ENCODE measurements at regions of chr19 and their contacts with region 1.

Region 1: GRCh38 chr19:15379083-15379995 is at the start of gene AKAP8:
- DNase-seq: peak; percentile 99
- H3K4me3 ChIP-seq: peak within 1 kb of the TSS; percentile 83
- H3K27ac ChIP-seq: peak within 1 kb of the TSS; percentile 75
- H3K4me1 ChIP-seq: peaks cover 35% of the 10 kb centered on the region
- CTCF ChIP-seq: no peak
- total RNA-seq, gene AKAP8: 22.2 and 26.4 TPM in 2 replicates

Region 2: GRCh38 chr19:15264061-15264932 is 115.0 kb before region 1 on chr19:
- CTCF ChIA-PET with region 1: no interaction called
- POLR2A ChIA-PET with region 1: no interaction called
- intact Hi-C with region 1: loop called (anchors 1 kb)
- DNase-seq: peak; percentile 76
- H3K4me3 ChIP-seq: no peak overlapping the region
- H3K27ac ChIP-seq: no peak overlapping the region
- H3K4me1 ChIP-seq: no peaks in the 10 kb centered on the region
- CTCF ChIP-seq: peak; percentile 93

Region 3: GRCh38 chr19:15288146-15288963 is 91.0 kb before region 1 on chr19:
- CTCF ChIA-PET with region 1: interaction called, 3 read pairs
- POLR2A ChIA-PET with region 1: interaction called, 3 read pairs
- intact Hi-C with region 1: loop called (anchors 2 kb)
- DNase-seq: peak; percentile 74
- H3K4me3 ChIP-seq: peak overlapping the region; percentile 44
- H3K27ac ChIP-seq: peak overlapping the region; percentile 87
- H3K4me1 ChIP-seq: peaks cover 100% of the 10 kb centered on the region
- CTCF ChIP-seq: no peak

Region 4: DNA sequence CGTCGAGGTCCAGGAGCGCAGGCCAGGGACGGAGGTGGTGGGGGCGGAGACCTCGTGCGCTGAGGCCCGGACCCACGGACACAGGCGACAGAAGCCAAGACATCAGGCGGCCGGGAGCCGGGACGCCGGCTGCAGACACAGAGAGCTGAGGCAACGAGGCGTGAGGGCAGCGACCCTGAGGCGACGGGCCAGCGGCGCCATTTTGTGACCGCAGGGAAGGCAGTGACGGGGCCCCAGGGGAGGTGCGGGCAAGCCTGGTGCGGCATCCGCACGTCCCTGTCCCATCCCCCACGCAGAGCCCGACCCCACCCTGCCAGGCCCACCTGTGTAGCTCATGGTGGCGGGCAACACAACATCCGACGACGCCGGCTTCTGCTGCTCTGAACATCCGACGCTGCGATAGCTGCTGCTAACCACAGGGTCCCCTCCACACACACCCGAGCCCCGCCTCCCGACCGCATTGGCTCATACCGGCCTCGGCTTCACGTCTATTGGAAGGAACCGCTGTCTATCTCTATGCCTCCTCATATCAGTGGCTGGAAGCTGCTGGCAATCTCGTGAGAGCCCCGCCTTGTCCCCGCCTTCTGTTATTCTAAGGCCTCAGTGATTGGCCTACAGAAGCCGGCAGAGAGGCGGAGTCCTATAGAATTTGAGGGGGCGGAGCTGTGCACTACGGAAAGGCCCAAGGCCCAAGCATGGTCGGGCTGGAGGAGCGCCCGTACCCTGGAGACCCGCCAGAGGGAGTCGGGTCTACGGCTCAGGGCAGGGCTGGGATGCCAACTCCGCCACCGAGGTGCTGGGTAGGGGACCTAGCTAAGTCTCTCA is 39.5 kb after region 1 on chr19 and contains the start of gene AKAP8L:
- CTCF ChIA-PET with region 1: no interaction called
- POLR2A ChIA-PET with region 1: interaction called, 12 read pairs
- intact Hi-C with region 1: loop called (anchors 2 kb)
- DNase-seq: peak; percentile 100
- H3K4me3 ChIP-seq: peak within 1 kb of the TSS; percentile 84
- H3K27ac ChIP-seq: peak within 1 kb of the TSS; percentile 69
- H3K4me1 ChIP-seq: peaks cover 22% of the 10 kb centered on the region
- CTCF ChIP-seq: peak; percentile 82
- total RNA-seq, gene AKAP8L: 119 and 122 TPM in 2 replicates

Region 5: GRCh38 chr19:15836595-15837337 is 457.4 kb after region 1 on chr19:
- CTCF ChIA-PET with region 1: no interaction called
- POLR2A ChIA-PET with region 1: interaction called, 3 read pairs
- intact Hi-C with region 1: loop called (anchors 2 kb)
- DNase-seq: peak; percentile 98
- H3K4me3 ChIP-seq: peak overlapping the region; percentile 82
- H3K27ac ChIP-seq: peak overlapping the region; percentile 89
- H3K4me1 ChIP-seq: peaks cover 18% of the 10 kb centered on the region
- CTCF ChIP-seq: no peak

Measured in OCI-LY7 (cell line).